ENCODE measurements at regions of chr18 and their contacts with region 1.

Region 1: GRCh38 chr18:286515-287310 is 18.9 kb upstream of the THOC1 start:
- DNase-seq: no peak
- ATAC-seq: peak in 2 of 4 donors; percentile 52 to 57
- H3K4me3 ChIP-seq: no peak overlapping the region
- H3K27ac ChIP-seq: no peak overlapping the region
- H3K4me1 ChIP-seq: peaks cover 0 to 10% (median 0%) of the 10 kb centered on the region in 12 donors
- H3K27me3 ChIP-seq: no peaks in the 10 kb centered on the region
- CTCF ChIP-seq: peak; percentile 23 to 66 (median 57)
- POLR2A ChIP-seq: no peak

Region 2: GRCh38 chr18:331221-331821 is 44.6 kb after region 1 on chr18:
- intact Hi-C with region 1: no loop called
- DNase-seq: peak in 1 of 5 donors; percentile 26
- ATAC-seq: peak in 3 of 4 donors; percentile 21 to 52 (median 41)
- H3K4me3 ChIP-seq: no peak overlapping the region
- H3K27ac ChIP-seq: peak overlapping the region in 8 of 12 donors; percentile 18 to 67 (median 54)
- H3K4me1 ChIP-seq: peaks cover 0 to 35% (median 18%) of the 10 kb centered on the region in 12 donors
- H3K27me3 ChIP-seq: no peaks in the 10 kb centered on the region
- CTCF ChIP-seq: no peak
- POLR2A ChIP-seq: no peak

Region 3: DNA sequence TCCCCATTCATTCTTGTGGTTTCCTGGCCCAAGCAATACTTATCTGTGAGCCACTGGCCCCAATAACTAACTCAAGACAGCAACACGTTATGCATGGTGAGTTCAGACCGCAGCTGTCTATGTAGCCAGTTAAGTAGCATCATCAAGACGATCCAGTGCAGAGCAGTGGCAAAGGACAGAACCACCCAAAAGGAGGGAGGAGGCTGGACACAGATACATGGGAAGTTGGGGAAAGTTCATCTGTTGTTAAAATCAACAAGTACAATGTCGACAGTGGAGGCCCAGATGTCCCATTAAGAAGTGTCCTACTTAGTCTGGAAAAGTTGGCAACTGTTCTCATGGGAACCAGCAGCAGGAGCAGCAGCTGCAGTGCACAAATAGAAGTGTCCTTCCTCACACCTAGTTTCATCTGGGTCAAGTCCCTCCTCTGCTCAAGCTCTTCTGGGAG is 88.0 kb after region 1 on chr18:
- intact Hi-C with region 1: no loop called
- DNase-seq: peak in 3 of 5 donors; percentile 13 to 38 (median 33)
- ATAC-seq: peak; percentile 10 to 55 (median 38)
- H3K4me3 ChIP-seq: no peak overlapping the region
- H3K27ac ChIP-seq: peak overlapping the region in 8 of 12 donors; percentile 6 to 60 (median 38)
- H3K4me1 ChIP-seq: peaks cover 0 to 92% (median 31%) of the 10 kb centered on the region in 12 donors
- H3K27me3 ChIP-seq: no peaks in the 10 kb centered on the region
- CTCF ChIP-seq: no peak
- POLR2A ChIP-seq: no peak

Region 4: GRCh38 chr18:616380-616995 is 329.8 kb after region 1 on chr18:
- intact Hi-C with region 1: loop called (anchors 1 to 5 kb)
- DNase-seq: no peak
- ATAC-seq: peak in 3 of 4 donors; percentile 69 to 76 (median 69)
- H3K4me3 ChIP-seq: no peak overlapping the region
- H3K27ac ChIP-seq: peak overlapping the region in 1 of 12 donors; percentile 91
- H3K4me1 ChIP-seq: peaks cover 0 to 17% (median 0%) of the 10 kb centered on the region in 12 donors
- H3K27me3 ChIP-seq: peaks cover 0 to 2% (median 0%) of the 10 kb centered on the region in 9 donors
- CTCF ChIP-seq: peak; percentile 58 to 87 (median 78)
- POLR2A ChIP-seq: no peak

Region 5: DNA sequence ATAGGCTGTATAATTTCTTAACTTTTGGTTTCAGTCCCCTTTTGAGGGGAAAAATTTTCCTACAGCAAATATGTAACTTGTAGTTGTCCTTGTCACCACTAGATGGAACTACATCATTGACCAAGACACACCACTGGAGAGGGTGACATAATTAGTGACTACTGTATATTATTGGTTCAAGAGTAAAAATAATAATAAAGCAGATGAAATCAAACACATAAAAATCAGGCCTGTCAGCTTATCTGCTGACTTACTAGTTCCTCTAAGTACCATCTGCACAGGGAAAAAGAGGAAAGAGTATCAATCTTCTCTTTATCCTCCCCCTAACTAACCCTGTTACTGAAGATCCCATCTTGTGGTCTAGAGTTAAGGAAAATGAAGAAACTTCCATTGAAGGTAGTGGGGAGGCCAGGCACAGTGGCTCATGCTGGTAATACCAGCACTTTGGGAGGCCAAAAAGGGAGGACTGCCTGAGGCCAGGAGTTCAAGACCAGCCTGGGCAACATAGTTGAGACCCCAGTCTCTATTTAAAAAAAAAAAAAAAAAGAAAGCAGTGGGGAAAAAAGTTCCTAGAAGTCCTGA is 455.3 kb after region 1 on chr18:
- intact Hi-C with region 1: loop called in 1 of 10 experiments (anchors 10 kb)
- DNase-seq: no peak
- ATAC-seq: peak; percentile 20 to 82 (median 74)
- H3K4me3 ChIP-seq: no peak overlapping the region
- H3K27ac ChIP-seq: peak overlapping the region in 1 of 12 donors; percentile 9
- H3K4me1 ChIP-seq: peaks cover 0 to 4% (median 0%) of the 10 kb centered on the region in 12 donors
- H3K27me3 ChIP-seq: no peaks in the 10 kb centered on the region
- CTCF ChIP-seq: peak; percentile 73 to 86 (median 79)
- POLR2A ChIP-seq: no peak

Region 6: GRCh38 chr18:830315-830901 is 543.7 kb after region 1 on chr18:
- intact Hi-C with region 1: loop called in 4 of 10 experiments (anchors 5 to 10 kb)
- DNase-seq: peak in 3 of 5 donors; percentile 35 to 51 (median 40)
- ATAC-seq: peak; percentile 68 to 92 (median 82)
- H3K4me3 ChIP-seq: peak overlapping the region in 1 of 12 donors; percentile 13
- H3K27ac ChIP-seq: peak overlapping the region; percentile 13 to 86 (median 65)
- H3K4me1 ChIP-seq: peaks cover 0 to 19% (median 6%) of the 10 kb centered on the region in 12 donors
- H3K27me3 ChIP-seq: peaks cover 0 to 14% (median 0%) of the 10 kb centered on the region in 9 donors
- CTCF ChIP-seq: no peak
- POLR2A ChIP-seq: no peak

Region 7: DNA sequence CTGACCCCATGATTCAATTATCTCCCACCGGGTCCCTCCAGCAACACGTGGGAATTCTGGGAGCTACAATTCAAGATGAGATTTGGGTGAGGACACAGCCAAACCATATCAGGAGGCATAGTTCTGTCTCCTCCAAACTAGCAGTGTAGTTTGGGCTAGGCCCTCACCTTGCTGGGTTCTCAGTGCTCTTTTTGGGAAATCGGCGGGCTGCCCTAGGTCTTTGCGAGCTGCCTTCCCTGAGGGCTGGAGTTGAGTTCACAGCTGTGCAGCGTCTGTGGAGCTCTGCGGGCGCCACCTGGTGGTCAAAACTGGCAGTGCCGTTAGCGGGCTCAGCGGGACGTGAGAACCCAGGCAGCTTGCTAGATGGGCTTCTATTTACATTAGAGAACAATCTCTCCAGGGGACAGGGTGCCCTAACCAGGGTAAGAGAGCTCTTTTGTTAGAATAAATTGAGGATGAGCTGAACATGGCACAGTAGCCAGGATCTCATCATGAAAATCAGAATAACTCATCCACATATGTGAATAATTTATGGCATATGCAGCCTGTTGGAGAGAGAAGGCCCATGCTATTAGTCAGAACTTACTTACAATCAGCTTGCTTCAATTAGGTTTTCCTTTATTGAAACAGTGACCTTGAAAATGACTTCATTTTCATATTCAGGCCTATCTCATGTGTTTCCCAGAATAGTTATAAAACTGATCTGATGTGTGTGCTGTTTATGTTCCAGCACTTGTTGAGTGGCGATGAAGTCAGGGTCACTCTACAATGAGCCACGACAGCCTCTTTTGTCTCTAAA is 552.7 kb after region 1 on chr18:
- intact Hi-C with region 1: loop called in 5 of 10 experiments (anchors 2 to 10 kb)
- DNase-seq: peak; percentile 79 to 91 (median 84)
- ATAC-seq: peak; percentile 77 to 97 (median 94)
- H3K4me3 ChIP-seq: no peak overlapping the region
- H3K27ac ChIP-seq: no peak overlapping the region
- H3K4me1 ChIP-seq: peaks cover 0 to 10% (median 0%) of the 10 kb centered on the region in 12 donors
- H3K27me3 ChIP-seq: no peaks in the 10 kb centered on the region
- CTCF ChIP-seq: peak; percentile 93 to 99 (median 97)
- POLR2A ChIP-seq: no peak

Measured in heart left ventricle (tissue), 16 donors.